BJ (cell line): ENCODE measurements at regions of chr20 and their contacts with region 1.

Region 1: GRCh38 chr20:5100684-5101347 is 18.9 kb downstream of the PCNA start:
- DNase-seq: no peak
- H3K4me3 ChIP-seq: no peak overlapping the region
- H3K27me3 ChIP-seq: no peaks in the 10 kb centered on the region
- CTCF ChIP-seq: peak; percentile 83

Region 2: DNA sequence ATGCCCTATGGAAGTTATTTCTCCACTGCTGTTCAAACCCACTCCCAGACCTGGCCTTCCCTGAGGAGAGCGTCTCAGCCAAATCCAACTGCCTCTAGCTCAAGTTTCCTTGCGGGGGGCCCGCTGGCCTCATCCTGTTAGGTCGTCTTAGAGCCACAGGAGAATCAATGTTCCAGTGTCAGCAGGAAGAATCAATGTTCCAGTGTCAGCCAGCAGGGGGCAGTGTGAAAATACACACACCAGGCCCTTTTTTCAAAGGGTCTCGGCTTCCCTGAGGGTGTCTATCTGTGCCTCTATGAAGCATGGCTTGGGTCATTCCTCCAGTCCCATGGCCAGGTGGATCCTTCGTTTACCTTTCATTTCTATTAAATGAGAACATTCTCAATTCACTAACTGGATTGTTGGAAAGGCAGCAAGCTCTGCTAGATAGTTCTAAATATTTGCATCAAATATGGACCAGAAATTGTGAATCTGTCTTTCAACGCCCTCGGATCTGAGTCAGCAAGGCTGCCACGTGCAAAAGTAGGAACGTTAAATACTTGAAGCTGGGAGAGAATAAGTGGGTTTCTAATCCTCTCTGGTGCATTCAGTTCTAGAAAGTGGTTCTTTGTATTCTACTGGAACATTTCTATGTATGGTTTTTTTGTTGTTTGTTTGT is 359.9 kb before region 1 on chr20:
- CTCF ChIA-PET with region 1: interaction called, 15 read pairs
- POLR2A ChIA-PET with region 1: no interaction called
- DNase-seq: no peak
- H3K4me3 ChIP-seq: no peak overlapping the region
- H3K27me3 ChIP-seq: 0 out of 2 replicates have a peak, but pooled peaks cover 1% of the 10 kb centered on the region
- CTCF ChIP-seq: peak; percentile 81

Region 3: DNA sequence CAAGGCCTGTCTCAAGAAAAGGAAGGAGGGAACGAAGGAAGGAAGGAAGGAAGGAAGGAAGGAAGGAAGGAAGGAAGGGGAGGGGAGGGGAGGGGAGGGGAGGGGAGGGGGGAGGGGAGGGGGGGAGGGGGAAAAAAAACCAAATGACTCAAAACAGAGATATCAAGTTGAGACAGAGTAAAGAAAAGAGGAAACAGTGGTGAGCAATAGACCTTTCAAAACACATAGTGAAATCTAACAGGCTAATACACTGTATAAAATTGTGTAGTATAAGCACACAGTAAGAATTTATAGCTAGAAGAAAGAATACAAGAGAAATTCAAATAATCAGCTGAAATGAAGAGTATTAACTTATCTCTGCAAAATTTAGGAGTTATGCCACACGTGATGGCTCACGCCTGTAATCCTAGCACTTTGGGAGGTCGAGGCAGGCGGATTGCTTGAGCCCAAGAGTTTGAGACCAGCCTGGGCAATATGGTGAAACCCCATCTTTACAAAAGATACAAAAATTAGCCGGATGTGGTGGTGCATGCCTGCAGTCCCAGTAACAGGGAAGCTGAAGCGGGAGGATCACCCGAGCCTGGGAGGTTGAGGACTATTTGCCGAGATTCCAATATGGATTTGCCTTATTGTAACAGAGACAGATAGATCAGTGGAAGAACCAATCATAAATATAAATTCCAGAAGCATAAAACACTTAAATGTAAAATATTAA is 255.9 kb before region 1 on chr20:
- CTCF ChIA-PET with region 1: no interaction called
- POLR2A ChIA-PET with region 1: no interaction called
- DNase-seq: no peak
- H3K4me3 ChIP-seq: no peak overlapping the region
- H3K27me3 ChIP-seq: no peaks in the 10 kb centered on the region
- CTCF ChIP-seq: no peak

Region 4: DNA sequence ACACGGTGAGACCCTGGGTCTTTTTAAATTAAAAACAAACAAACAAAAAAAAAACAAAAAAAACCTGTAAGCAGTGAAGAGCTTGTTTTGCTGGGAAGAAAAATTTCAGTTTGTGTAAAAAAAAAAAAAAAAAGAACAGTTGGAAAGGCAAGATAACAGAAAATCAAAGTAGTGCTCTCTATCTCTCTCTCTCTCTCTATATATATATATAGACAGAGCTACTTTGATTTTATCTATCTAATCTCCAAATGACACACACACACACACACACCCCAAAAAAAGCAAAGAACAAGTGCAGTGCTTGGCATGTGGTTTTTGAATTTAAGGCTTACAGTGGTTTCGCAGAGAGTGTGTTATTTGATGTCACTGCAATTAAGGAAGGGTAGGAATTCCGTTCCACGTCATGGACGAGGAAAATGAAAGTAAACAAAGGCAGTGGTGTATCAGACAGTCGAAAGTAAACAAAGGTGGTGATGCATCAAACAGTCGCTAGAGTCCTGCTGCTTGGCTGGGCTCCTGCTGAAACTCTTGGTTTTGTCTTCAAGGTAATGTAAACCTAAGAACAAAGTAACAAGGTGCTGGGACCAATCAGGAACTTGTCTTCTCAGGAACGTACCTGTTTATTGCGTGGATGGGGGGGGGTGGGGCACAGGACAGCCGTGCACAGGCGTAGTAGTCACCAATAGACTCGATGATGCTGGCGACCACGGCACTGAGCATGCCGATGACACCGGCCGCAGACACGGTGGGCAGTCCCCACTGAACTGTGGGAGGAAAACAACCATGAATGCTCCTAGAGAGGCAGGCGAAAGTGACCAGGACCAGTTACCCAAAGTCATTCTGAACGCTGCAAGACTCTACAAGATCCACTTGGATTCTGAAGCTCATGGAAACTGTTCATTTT is 231.3 kb before region 1 on chr20:
- CTCF ChIA-PET with region 1: no interaction called
- POLR2A ChIA-PET with region 1: interaction called, 18 read pairs
- DNase-seq: no peak
- H3K4me3 ChIP-seq: no peak overlapping the region
- H3K27me3 ChIP-seq: no peaks in the 10 kb centered on the region
- CTCF ChIP-seq: no peak

Region 5: DNA sequence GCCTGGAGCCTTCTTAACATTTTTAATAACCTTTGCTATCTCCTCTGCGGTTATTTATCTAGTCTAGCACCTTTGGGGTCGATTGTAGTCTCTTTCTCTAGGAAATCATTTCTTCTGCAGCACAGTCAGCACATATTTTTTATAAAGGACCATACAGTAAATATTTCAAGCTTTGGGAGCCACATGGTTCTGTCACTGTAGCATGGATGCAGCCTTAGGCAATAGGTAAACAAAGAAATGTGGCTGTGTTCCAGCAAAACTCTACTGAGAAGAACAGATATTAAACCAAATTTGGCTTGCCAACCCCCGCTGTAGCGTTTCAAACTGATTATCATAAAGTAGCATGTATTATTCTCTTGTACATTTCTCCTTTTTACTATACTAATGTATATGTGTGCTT is 195.2 kb before region 1 on chr20:
- CTCF ChIA-PET with region 1: no interaction called
- POLR2A ChIA-PET with region 1: no interaction called
- DNase-seq: no peak
- H3K4me3 ChIP-seq: no peak overlapping the region
- H3K27me3 ChIP-seq: no peaks in the 10 kb centered on the region
- CTCF ChIP-seq: no peak

Region 6: DNA sequence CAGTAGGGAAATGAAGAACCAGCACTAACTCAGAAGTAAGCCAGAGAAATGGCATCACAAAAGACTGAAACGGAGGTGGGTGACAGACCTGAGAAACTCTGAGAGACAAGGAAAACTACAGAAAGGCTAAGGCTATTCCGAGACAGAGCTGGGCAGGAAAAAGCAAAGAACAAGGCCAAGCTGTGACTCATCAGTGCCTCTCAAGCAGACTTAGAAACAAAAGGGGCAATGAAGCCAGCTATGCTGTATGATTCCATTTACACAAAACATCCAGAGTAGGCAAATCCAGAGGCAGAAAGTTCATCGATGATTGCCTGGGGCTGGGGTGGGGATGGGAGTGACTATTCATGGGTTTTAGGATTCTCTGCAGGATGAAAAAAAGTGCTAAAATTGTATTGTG is 149.5 kb before region 1 on chr20:
- CTCF ChIA-PET with region 1: interaction called, 13 read pairs
- POLR2A ChIA-PET with region 1: no interaction called
- DNase-seq: no peak
- H3K4me3 ChIP-seq: no peak overlapping the region
- H3K27me3 ChIP-seq: no peaks in the 10 kb centered on the region
- CTCF ChIP-seq: no peak

Region 7: DNA sequence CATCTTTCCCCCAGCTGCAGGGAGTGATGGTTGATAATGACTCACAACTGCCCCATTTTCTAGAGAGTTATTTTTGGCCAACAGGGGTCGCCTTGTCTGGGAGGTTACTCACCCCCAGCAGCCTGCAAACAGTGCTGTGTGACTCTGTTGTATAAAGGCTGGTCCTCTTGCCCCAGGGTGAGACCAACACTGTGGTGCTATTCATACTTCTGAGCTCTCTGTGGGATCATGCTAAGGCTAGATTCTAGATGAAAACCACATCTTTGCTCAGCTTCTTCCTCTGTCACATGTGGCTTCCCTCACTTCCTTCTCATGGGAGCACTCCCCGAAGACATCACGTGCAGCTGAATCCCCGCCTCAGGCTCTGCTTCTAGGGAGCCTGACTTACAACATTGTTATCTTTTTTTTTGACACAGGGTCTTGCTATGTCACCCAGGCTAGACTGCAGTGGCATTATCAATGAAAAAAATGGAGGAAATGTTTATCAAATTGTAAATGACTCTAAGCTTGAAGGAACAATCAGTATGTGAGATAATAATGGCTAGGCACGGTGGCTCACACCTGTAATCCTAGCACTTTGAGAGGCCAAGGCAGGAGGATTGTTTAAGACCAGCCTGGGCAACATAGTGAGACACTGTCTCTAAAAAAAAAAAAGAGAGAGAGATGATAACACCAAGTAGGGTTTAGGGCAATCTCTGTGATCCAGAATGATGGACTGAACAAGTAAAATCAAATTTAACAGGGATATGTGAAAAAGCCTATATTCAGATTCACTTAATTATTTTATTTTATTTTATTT is 43.8 kb before region 1 on chr20:
- CTCF ChIA-PET with region 1: interaction called, 15 read pairs
- POLR2A ChIA-PET with region 1: no interaction called
- DNase-seq: no peak
- H3K4me3 ChIP-seq: no peak overlapping the region
- H3K27me3 ChIP-seq: no peaks in the 10 kb centered on the region
- CTCF ChIP-seq: peak; percentile 41

Region 8: GRCh38 chr20:5119435-5120188 is 18.8 kb after region 1 on chr20 and contains the start of gene PCNA:
- CTCF ChIA-PET with region 1: interaction called, 10 read pairs
- POLR2A ChIA-PET with region 1: interaction called, 3 read pairs
- DNase-seq: peak; percentile 88
- H3K4me3 ChIP-seq: peak within 1 kb of the TSS; percentile 100
- H3K27me3 ChIP-seq: no peaks in the 10 kb centered on the region
- CTCF ChIP-seq: no peak
- polyA plus RNA-seq, gene PCNA: 78.2 and 94.6 TPM in 2 replicates

Region 9: GRCh38 chr20:5135363-5136012 is 34.7 kb after region 1 on chr20:
- CTCF ChIA-PET with region 1: no interaction called
- POLR2A ChIA-PET with region 1: no interaction called
- DNase-seq: no peak
- H3K4me3 ChIP-seq: no peak overlapping the region
- H3K27me3 ChIP-seq: no peaks in the 10 kb centered on the region
- CTCF ChIP-seq: no peak